BJ (cell line): ENCODE measurements at regions of chr7 and their contacts with region 1.

Region 1: GRCh38 chr7:151123822-151124464 is 37.7 kb downstream of the AGAP3 start:
- DNase-seq: no peak
- H3K4me3 ChIP-seq: no peak overlapping the region
- H3K27me3 ChIP-seq: no peaks in the 10 kb centered on the region
- CTCF ChIP-seq: peak; percentile 99

Region 2: DNA sequence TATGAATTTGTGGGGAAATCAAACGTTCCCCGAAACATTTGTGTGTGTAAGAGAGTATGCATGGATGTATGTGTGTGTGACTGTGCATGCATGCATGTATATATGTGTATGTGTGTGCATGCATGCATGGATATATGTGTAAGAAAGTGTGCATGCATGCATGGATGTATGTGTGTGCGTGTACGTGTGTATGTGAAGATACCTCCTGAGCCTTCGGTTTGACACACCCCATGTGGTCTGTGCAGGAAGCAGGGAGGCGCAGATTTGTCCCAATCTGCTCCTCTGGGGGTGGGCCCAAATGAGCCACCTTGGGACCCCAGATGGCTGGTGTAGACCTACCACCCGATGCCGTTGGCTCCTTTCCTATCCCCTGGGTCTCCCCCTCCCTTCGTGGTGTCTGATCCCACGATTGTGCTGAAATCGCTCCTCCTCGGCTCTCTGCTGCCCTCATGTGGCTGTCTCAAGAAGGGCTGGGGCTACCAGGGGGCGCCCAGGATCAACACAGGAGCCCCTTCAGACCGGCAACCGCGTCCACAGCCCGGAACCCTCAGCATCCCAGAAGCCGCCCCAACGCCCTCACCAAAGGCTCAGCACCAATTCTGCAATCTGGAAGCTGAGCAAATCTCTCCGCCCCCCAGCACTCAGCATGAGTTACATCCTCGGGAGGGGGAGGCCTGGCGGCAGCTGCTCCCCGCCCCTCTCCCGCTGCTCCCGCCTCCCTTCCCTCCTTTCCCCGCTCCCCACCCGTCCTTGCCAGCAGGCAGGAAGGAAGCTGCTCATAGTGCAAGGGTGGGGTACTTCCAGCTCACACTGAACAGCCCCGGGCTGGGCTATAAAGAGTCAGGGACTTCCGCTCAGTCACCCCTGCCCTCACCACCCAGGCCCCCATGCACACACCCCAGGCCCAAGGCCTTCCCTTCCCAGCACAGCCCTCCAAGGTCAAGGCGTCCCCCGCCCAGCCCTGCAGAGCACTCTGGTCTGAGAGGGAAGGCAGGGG is 135.4 kb before region 1 on chr7:
- CTCF ChIA-PET with region 1: no interaction called
- POLR2A ChIA-PET with region 1: no interaction called
- DNase-seq: no peak
- H3K4me3 ChIP-seq: no peak overlapping the region
- H3K27me3 ChIP-seq: peaks cover 4% of the 10 kb centered on the region
- CTCF ChIP-seq: peak; percentile 84

Region 3: DNA sequence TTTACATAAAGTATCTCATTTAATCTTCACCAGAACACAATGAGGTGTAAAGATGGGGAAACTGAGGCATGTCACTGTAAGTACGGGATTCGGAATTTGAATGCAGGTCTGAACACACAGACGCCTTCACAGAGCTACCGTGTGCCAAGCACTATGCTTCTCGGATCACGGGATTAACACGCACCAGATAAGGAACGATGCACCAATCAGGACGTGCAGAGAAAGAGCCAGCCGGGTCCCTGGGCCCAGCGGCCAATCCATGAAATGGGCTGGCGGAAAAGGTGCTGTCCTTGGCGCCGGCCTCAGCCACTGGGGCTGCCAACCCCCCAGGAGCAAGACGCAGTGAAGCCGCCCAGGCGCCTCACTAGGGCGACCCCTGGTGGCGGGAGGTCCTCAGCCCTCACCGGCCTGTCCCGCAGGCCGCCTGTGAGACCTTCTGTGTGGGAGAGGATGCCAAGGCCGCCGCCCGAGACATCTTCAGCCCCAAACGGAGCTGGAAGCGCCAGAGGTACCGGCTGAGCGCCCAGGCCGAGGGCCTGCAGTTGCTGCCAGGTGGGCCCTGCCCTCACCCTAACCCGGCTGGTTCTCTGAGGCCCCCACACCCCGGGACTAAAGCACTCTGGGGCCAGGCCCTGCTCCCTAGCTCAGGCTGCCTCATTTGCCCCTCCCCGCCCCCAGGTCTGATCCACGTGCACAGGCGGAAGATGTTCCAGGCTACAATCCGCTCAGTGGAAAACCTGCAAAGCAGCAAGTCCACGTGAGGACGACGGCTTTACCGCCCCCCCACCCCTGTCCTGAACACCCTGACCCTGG is 115.2 kb before region 1 on chr7:
- CTCF ChIA-PET with region 1: interaction called, 10 read pairs
- POLR2A ChIA-PET with region 1: no interaction called
- DNase-seq: no peak
- H3K4me3 ChIP-seq: no peak overlapping the region
- H3K27me3 ChIP-seq: peaks cover 2% of the 10 kb centered on the region
- CTCF ChIP-seq: peak; percentile 71

Region 4: DNA sequence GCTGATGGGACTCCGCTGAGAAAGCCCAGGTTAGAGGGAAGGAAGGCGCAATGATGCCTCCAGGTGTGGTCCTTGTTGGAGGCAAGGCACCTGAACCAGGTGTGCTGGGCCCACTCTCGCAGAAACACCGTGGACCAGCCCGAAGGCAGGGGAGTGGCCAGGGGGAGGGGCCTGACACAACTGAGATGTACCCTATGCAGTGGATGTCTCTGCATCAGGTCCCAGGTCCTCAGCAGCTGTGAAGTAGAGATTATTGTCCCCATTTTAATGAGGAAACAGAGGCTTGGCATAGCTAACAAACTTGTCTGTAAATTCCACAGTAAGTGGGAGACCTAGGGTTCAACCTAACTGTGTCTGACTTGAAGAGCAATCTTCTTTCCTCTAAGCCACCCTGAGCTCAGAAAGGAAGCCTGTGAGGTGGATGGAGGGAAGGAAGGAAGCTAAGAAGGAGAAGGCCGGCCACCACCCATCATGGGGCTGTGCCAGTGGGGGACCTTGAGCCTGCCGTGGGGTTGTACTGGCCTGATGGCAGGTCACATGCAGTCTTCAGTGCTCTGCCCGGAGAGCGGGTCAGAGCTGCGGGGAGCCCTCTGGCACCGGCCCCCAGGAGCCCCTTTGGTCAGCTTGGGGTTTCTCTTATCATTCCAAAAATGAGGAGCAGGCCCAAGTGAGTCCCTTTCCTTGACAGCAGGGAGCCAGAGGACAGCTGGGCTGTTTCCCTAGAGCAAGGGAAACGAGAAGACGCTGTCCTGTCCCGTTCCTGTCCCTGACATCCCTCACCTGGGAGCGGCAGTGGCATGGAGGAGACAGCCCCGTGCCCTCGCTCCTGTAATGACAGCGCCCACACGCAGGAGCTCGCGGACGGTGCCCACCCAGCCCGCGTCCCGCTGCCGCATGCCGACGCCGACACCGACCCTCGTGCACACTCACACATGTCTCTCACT is 11.9 kb after region 1 on chr7:
- CTCF ChIA-PET with region 1: interaction called, 16 read pairs
- POLR2A ChIA-PET with region 1: no interaction called
- DNase-seq: no peak
- H3K4me3 ChIP-seq: no peak overlapping the region
- H3K27me3 ChIP-seq: no peaks in the 10 kb centered on the region
- CTCF ChIP-seq: no peak

Region 5: GRCh38 chr7:151304856-151305255 is 180.9 kb after region 1 on chr7:
- CTCF ChIA-PET with region 1: interaction called, 16 read pairs
- POLR2A ChIA-PET with region 1: no interaction called
- DNase-seq: no peak
- H3K4me3 ChIP-seq: peak overlapping the region; percentile 7; the same call in 1 of the 2 replicates
- H3K27me3 ChIP-seq: peaks cover 6% of the 10 kb centered on the region
- CTCF ChIP-seq: no peak

Region 6: GRCh38 chr7:151351027-151351426 is 227.1 kb after region 1 on chr7:
- CTCF ChIA-PET with region 1: no interaction called
- POLR2A ChIA-PET with region 1: no interaction called
- DNase-seq: no peak
- H3K4me3 ChIP-seq: no peak overlapping the region
- H3K27me3 ChIP-seq: no peaks in the 10 kb centered on the region
- CTCF ChIP-seq: 0 out of 2 replicates have a peak, but pooled peaks have one; percentile 17

Region 7: GRCh38 chr7:151432791-151433521 is 309.0 kb after region 1 on chr7:
- CTCF ChIA-PET with region 1: no interaction called
- POLR2A ChIA-PET with region 1: no interaction called
- DNase-seq: no peak
- H3K4me3 ChIP-seq: no peak overlapping the region
- H3K27me3 ChIP-seq: peaks cover 1% of the 10 kb centered on the region; the same call in 1 of the 2 replicates
- CTCF ChIP-seq: peak; percentile 25; the same call in 1 of the 2 replicates